Activated CD8-positive, alpha-beta memory T cell treated with anti-CD3 and anti-CD28 coated beads, Interleukin-2, amount 10 ng/mL, durations not matched to agents 7 days and 5 days (primary cell): ENCODE measurements at regions of chr20 and their contacts with region 1.

Region 1: GRCh38 chr20:17504898-17505635 is 26.1 kb downstream of the BFSP1 start:
- DNase-seq: peak; percentile 89
- ATAC-seq: peak; percentile 75
- H3K4me3 Mint-ChIP-seq: peak overlapping the region; percentile 78
- H3K27ac Mint-ChIP-seq: peak overlapping the region; percentile 96
- H3K4me1 Mint-ChIP-seq: peaks cover 60% of the 10 kb centered on the region
- H3K27me3 Mint-ChIP-seq: peaks cover 2% of the 10 kb centered on the region

Region 2: GRCh38 chr20:17233626-17234025 is 271.4 kb before region 1 on chr20:
- CTCF ChIA-PET with region 1: no interaction called
- DNase-seq: no peak
- ATAC-seq: no peak
- H3K4me3 Mint-ChIP-seq: no peak overlapping the region
- H3K27ac Mint-ChIP-seq: no peak overlapping the region
- H3K4me1 Mint-ChIP-seq: no peaks in the 10 kb centered on the region
- H3K27me3 Mint-ChIP-seq: peaks cover 11% of the 10 kb centered on the region

Region 3: GRCh38 chr20:17530716-17531664 is 25.9 kb after region 1 on chr20 and contains the start of gene BFSP1:
- CTCF ChIA-PET with region 1: interaction called, 37 read pairs
- DNase-seq: peak; percentile 71
- ATAC-seq: peak; percentile 81
- H3K4me3 Mint-ChIP-seq: peak within 1 kb of the TSS; percentile 84
- H3K27ac Mint-ChIP-seq: peak within 1 kb of the TSS; percentile 92
- H3K4me1 Mint-ChIP-seq: peaks cover 28% of the 10 kb centered on the region
- H3K27me3 Mint-ChIP-seq: peaks cover 16% of the 10 kb centered on the region
- total RNA-seq, gene BFSP1: 1.7 to 3.2 TPM

Region 4: DNA sequence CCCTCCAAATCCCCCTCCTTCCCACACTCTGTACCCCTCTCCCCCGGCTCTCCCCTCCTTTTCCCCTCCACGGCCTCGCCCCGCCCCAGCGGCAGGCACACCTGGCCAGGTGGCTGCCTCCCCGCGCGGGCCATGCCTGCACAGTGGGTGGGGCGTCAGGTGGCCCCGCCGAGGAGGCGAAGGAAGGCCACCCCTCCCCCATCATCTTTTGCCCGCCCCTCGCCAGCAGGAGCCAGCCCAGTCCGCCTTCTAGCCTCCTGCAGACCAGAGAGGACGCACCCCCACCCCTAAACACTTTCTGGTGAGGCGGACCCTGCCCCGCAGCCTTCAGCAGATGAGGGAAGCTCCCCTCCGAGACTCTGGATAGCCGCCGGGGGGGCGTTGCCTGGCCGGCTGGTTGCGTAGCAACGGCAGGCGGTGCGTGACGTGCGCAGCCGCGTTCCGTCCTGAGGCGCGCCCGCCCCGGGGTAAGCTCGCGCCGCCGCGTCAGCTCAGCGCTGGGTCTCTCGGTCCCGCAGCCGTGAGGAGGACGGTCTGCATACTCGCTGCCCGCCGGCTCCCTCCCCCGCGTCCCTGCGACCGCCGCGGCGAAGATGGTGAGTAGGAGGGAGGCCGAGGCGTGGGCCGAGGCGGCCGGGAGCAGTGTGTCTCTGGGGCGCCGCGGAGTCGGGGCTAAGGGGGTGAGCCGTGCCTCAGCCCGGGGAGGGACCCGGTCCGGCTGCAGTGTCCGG is 64.7 kb after region 1 on chr20 and contains the start of gene DSTN:
- CTCF ChIA-PET with region 1: interaction called, 19 read pairs
- DNase-seq: peak; percentile 91
- ATAC-seq: peak; percentile 90
- H3K4me3 Mint-ChIP-seq: peak within 1 kb of the TSS; percentile 88
- H3K27ac Mint-ChIP-seq: peak within 1 kb of the TSS; percentile 89
- H3K4me1 Mint-ChIP-seq: peaks cover 29% of the 10 kb centered on the region
- H3K27me3 Mint-ChIP-seq: peaks cover 21% of the 10 kb centered on the region
- total RNA-seq, gene DSTN: 55.8 to 78.3 TPM

Region 5: DNA sequence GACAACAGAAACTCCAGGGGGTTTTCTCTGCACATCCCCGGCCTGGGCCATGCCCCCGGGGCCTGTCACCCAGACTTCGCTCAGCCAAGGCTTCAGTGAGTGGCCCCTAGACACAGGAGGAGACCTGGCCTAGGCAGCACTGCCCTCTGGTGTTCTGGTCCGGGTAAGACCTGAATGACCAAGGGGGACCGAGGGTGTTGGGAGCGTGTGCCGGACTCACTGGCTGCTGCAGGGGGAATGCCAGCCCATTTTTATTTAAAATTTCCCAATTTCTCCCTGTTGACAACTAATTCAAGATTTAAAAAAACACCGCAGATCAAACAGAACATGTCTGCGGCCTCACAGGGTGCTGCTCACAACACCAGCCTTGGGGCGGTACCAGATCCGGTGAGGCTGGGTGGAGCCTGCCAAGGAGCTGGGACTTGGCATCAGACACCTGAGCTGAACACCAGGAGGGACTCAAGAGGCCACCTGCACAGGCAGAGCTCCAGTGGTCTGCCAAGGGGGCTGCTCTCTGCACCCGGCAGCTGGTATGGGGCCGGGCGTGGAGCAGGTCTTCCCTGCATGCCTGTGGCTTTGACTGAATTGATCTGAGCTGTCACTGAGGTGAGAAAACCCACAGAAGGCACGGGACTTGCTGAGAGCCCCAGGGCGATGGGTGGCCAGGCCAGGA is 112.6 kb after region 1 on chr20:
- CTCF ChIA-PET with region 1: interaction called, 31 read pairs
- DNase-seq: peak; percentile 69
- ATAC-seq: peak; percentile 54
- H3K4me3 Mint-ChIP-seq: no peak overlapping the region
- H3K27ac Mint-ChIP-seq: peak overlapping the region; percentile 28
- H3K4me1 Mint-ChIP-seq: peaks cover 10% of the 10 kb centered on the region
- H3K27me3 Mint-ChIP-seq: no peaks in the 10 kb centered on the region

Region 6: DNA sequence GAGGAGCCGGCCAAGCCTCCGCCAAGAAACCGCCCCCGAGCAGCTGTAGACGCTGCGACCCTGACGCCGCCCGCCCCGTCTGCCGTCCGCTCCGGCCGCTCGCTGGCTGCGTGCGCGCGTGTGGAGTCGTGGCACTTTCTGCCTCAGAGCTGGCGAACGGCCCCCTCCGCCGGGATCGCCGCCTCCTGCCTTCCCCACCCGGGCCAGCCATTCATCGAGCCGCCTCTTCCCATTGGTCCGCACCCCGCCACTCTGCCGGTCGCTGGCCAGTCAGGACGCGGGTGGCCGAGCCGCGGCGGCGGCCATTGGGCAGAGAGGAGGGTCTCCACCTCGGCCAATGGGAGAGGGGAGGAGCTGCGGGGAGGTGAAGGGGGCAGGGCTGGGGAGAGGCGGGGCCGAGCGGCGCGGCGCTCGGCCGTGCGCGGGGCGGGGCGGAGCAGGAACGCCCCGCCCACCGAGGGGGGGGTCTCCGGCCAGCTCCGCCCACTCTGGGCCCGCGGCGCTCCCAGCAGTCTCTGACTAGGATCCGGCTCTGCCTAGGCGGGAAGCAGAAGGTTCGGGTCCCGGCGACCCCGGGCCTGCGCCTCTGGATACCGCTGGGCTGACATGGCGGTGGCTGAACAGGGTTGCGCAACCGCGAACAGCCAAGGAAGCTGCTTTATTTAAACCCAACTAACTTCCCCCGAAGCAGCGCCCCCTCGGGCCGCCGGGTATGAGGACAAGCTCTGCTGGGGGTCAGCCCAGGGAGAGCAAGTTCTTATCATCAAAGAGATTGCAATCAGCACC is 177.2 kb after region 1 on chr20 and contains the start of gene RRBP1:
- CTCF ChIA-PET with region 1: interaction called, 26 read pairs
- DNase-seq: peak; percentile 98
- ATAC-seq: peak; percentile 95
- H3K4me3 Mint-ChIP-seq: peak within 1 kb of the TSS; percentile 76
- H3K27ac Mint-ChIP-seq: peak within 1 kb of the TSS; percentile 84
- H3K4me1 Mint-ChIP-seq: peaks cover 24% of the 10 kb centered on the region
- H3K27me3 Mint-ChIP-seq: peaks cover 37% of the 10 kb centered on the region
- total RNA-seq, gene RRBP1: 55.7 to 59.6 TPM

Region 7: GRCh38 chr20:17938871-17939619 is 434.0 kb after region 1 on chr20:
- CTCF ChIA-PET with region 1: interaction called, 17 read pairs
- DNase-seq: peak; percentile 80
- ATAC-seq: peak; percentile 92
- H3K4me3 Mint-ChIP-seq: no peak overlapping the region
- H3K27ac Mint-ChIP-seq: peak overlapping the region; percentile 75
- H3K4me1 Mint-ChIP-seq: peaks cover 30% of the 10 kb centered on the region
- H3K27me3 Mint-ChIP-seq: no peaks in the 10 kb centered on the region